HCT116 (cell line): ENCODE measurements at regions of chrX and their contacts with region 1.

Region 1: DNA sequence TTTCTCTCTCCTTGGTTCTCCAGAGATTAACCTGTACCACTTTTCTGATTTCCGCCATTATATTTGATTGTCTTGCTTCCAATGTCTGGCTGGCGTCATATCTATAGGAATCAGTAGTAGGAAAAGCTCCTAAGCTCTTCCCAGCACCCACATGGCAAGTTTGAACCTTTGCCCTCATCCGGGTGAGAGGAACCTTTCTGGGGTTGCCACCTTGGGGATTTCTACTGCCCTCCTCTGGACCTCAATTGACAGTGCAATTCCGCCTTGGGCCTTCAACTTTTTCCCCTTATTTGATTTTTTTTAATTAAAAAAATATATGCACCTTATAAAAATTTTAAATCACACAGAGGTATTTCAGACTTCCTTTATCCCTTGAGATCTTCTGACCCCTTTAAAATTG is 2.0 kb upstream of the CXorf66 start:
- DNase-seq: no peak
- ATAC-seq: no peak
- H3K4me3 ChIP-seq: no peak overlapping the region
- H3K27ac ChIP-seq: no peak overlapping the region
- H3K4me1 ChIP-seq: peaks cover 0 to 4% of the 10 kb centered on the region in 2 experiments; a peak in 1 of 4 replicates
- H3K27me3 ChIP-seq: no peaks in the 10 kb centered on the region
- CTCF ChIP-seq: peak in 2 of 3 experiments; percentile 33 to 40; a peak in 3 of 6 replicates
- POLR2A ChIP-seq: no peak
- RAD21 ChIP-seq: no peak; the same call in 1 of the 2 replicates

Region 2: GRCh38 chrX:138775517-138775916 is 1191.8 kb before region 1 on chrX:
- CTCF ChIA-PET with region 1: no interaction called
- POLR2A ChIA-PET with region 1: no interaction called
- RAD21 ChIA-PET with region 1: no interaction called
- intact Hi-C with region 1: loop called (anchors 5 kb)
- DNase-seq: no peak
- ATAC-seq: no peak
- H3K4me3 ChIP-seq: no peak overlapping the region
- H3K27ac ChIP-seq: no peak overlapping the region
- H3K4me1 ChIP-seq: no peaks in the 10 kb centered on the region
- H3K27me3 ChIP-seq: no peaks in the 10 kb centered on the region
- CTCF ChIP-seq: 0 out of 6 replicates have a peak, but pooled peaks of 1 of the 3 experiments have one; percentile 10
- POLR2A ChIP-seq: no peak
- RAD21 ChIP-seq: no peak

Region 3: GRCh38 chrX:139187738-139188137 is 779.6 kb before region 1 on chrX:
- CTCF ChIA-PET with region 1: no interaction called
- POLR2A ChIA-PET with region 1: no interaction called
- RAD21 ChIA-PET with region 1: no interaction called
- intact Hi-C with region 1: loop called (anchors 10 kb)
- DNase-seq: no peak
- ATAC-seq: no peak
- H3K4me3 ChIP-seq: no peak overlapping the region
- H3K27ac ChIP-seq: no peak overlapping the region
- H3K4me1 ChIP-seq: no peaks in the 10 kb centered on the region
- H3K27me3 ChIP-seq: no peaks in the 10 kb centered on the region
- CTCF ChIP-seq: no peak
- POLR2A ChIP-seq: no peak
- RAD21 ChIP-seq: no peak

Region 4: GRCh38 chrX:139224953-139225665 is 742.2 kb before region 1 on chrX:
- CTCF ChIA-PET with region 1: no interaction called
- POLR2A ChIA-PET with region 1: no interaction called
- RAD21 ChIA-PET with region 1: no interaction called
- intact Hi-C with region 1: no loop called
- DNase-seq: no peak
- ATAC-seq: no peak
- H3K4me3 ChIP-seq: no peak overlapping the region
- H3K27ac ChIP-seq: no peak overlapping the region
- H3K4me1 ChIP-seq: no peaks in the 10 kb centered on the region
- H3K27me3 ChIP-seq: no peaks in the 10 kb centered on the region
- CTCF ChIP-seq: no peak
- POLR2A ChIP-seq: no peak
- RAD21 ChIP-seq: no peak

Region 5: DNA sequence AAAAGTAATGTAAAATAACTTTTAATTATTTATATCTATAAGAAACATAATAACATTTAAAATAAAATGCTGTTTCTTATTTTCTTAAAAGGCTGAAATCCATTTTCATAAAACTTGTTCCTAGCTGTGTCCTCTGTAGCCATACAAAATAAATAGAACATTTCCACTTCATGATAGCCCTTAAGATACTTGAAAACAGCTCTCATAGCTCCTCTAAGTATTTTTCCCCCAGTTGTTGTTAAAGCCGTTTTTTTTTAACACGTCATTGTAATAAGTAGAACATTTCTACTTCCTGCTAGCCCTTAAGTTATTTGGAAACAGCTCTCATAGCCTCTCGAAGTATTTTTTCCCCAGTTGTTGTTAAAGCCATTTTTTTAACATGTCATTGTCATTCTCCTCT is 634.8 kb after region 1 on chrX:
- CTCF ChIA-PET with region 1: no interaction called
- POLR2A ChIA-PET with region 1: no interaction called
- RAD21 ChIA-PET with region 1: no interaction called
- intact Hi-C with region 1: no loop called
- DNase-seq: no peak
- ATAC-seq: no peak
- H3K4me3 ChIP-seq: no peak overlapping the region
- H3K27ac ChIP-seq: no peak overlapping the region
- H3K4me1 ChIP-seq: no peaks in the 10 kb centered on the region
- H3K27me3 ChIP-seq: no peaks in the 10 kb centered on the region
- CTCF ChIP-seq: no peak
- POLR2A ChIP-seq: no peak
- RAD21 ChIP-seq: no peak